Heart right ventricle (tissue), 16 donors: ENCODE measurements at regions of chr1 and their contacts with region 1.

Region 1: GRCh38 chr1:163315773-163316374 is 5.9 kb upstream of the NUF2 start:
- DNase-seq: peak in 1 of 2 donors; percentile 25
- ATAC-seq: no peak
- H3K4me3 ChIP-seq: no peak overlapping the region
- H3K27ac ChIP-seq: no peak overlapping the region
- H3K4me1 ChIP-seq: peaks cover 0 to 12% (median 6%) of the 10 kb centered on the region in 9 donors
- H3K27me3 ChIP-seq: no peaks in the 10 kb centered on the region
- CTCF ChIP-seq: peak; percentile 44 to 85 (median 75)

Region 2: DNA sequence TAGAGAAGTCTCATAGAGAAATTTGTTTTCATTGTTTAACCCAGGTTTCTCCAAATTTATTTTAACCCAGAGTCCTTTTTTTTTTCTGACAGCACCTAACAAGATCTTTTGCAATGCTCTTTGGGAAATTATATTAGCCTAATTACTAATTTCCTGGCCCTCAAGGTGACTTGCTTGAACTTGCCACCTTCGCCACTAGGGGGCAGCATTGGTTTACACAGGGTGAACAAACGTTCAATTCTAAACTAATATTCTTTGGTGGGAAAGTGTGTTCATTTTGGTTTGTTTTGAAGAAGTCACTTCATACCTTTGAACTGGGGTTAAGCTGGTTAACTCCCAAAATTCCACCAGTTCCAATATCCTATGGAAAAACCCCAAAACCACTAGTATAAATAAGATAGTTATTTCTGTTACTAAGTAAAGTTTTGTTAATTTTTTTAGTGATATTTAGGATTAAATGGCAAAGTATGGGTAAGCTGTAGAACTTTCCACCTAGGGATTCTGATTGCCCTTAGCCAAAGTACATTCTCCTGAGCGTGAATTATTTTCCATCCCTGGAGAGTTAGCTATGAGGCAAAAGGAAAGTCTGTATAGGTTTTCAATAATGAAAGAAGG is 467.9 kb before region 1 on chr1:
- intact Hi-C with region 1: loop called in 6 of 10 experiments (anchors 2 to 10 kb)
- DNase-seq: peak; percentile 75 to 77
- ATAC-seq: peak in 1 of 8 donors; percentile 39
- H3K4me3 ChIP-seq: no peak overlapping the region
- H3K27ac ChIP-seq: no peak overlapping the region
- H3K4me1 ChIP-seq: no peaks in the 10 kb centered on the region
- H3K27me3 ChIP-seq: peaks cover 0 to 3% (median 0%) of the 10 kb centered on the region in 7 donors
- CTCF ChIP-seq: peak; percentile 80 to 95 (median 92)

Region 3: GRCh38 chr1:162854245-162854882 is 461.5 kb before region 1 on chr1:
- intact Hi-C with region 1: loop called in 8 of 10 experiments (anchors 1 to 10 kb)
- DNase-seq: peak; percentile 28 to 47
- ATAC-seq: peak in 4 of 8 donors; percentile 58 to 76 (median 70)
- H3K4me3 ChIP-seq: no peak overlapping the region
- H3K27ac ChIP-seq: no peak overlapping the region
- H3K4me1 ChIP-seq: no peaks in the 10 kb centered on the region
- H3K27me3 ChIP-seq: peaks cover 0 to 3% (median 0%) of the 10 kb centered on the region in 7 donors
- CTCF ChIP-seq: peak; percentile 43 to 84 (median 73)

Region 4: GRCh38 chr1:162878000-162878596 is 437.8 kb before region 1 on chr1:
- intact Hi-C with region 1: loop called in 7 of 10 experiments (anchors 1 to 5 kb)
- DNase-seq: peak; percentile 22 to 58
- ATAC-seq: peak; percentile 52 to 71 (median 68)
- H3K4me3 ChIP-seq: no peak overlapping the region
- H3K27ac ChIP-seq: no peak overlapping the region
- H3K4me1 ChIP-seq: no peaks in the 10 kb centered on the region
- H3K27me3 ChIP-seq: peaks cover 0 to 10% (median 0%) of the 10 kb centered on the region in 7 donors
- CTCF ChIP-seq: peak; percentile 50 to 79 (median 74)

Region 5: DNA sequence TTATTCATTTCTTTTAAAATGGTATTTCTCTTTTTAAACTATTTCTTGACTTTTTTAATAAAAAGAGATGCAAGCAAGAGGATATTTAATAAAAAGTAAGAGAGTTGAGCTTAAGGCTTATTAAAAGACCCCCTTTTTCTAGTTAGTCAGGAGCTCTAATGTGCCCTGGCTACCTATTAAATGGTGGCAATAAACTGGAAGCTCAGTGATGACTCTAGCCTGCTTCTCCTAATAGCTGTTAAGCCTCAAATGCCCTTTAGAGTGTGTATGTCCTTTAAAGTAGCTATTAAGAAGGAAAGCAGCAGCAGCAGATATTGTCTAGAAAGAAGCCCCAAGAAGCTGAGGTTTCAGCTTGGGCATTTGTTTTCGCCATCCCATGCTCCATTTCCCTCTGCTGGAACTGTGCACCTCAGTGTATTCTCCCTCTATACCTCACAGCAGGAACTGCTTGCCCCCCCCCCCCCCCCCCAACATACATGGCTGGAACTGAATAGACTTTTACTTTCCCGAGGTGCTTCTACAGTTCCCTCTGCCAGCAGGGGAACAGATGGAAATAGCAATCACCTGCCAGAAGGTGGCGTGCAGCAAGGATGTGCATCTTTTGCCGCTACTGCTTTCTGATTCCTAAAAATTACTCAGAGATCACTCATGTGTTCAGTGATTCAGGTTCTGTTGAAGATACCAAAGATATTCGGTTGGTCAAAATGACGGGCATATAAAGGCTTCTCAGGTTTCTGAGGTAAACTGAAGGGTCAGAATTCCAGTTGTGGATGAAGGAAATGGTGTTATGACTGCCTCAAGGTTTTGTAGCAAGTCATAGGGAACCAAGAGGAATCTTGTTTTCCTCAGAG is 244.2 kb before region 1 on chr1:
- intact Hi-C with region 1: loop called in 9 of 10 experiments (anchors 2 to 10 kb)
- DNase-seq: peak; percentile 33 to 74
- ATAC-seq: peak in 4 of 8 donors; percentile 37 to 58 (median 44)
- H3K4me3 ChIP-seq: peak overlapping the region in 7 of 10 donors; percentile 21 to 55 (median 49)
- H3K27ac ChIP-seq: peak overlapping the region in 3 of 10 donors; percentile 33 to 42 (median 37)
- H3K4me1 ChIP-seq: peaks cover 0 to 7% (median 0%) of the 10 kb centered on the region in 9 donors
- H3K27me3 ChIP-seq: peaks cover 0 to 39% (median 4%) of the 10 kb centered on the region in 7 donors
- CTCF ChIP-seq: peak; percentile 23 to 75 (median 66)

Region 6: GRCh38 chr1:163240705-163241104 is 75.2 kb before region 1 on chr1:
- intact Hi-C with region 1: no loop called
- DNase-seq: no peak
- ATAC-seq: no peak
- H3K4me3 ChIP-seq: no peak overlapping the region
- H3K27ac ChIP-seq: no peak overlapping the region
- H3K4me1 ChIP-seq: no peaks in the 10 kb centered on the region
- H3K27me3 ChIP-seq: no peaks in the 10 kb centered on the region
- CTCF ChIP-seq: no peak